Posterior vena cava (tissue), 2 donors: ENCODE measurements at regions of chr1 and their contacts with region 1.

Region 1: DNA sequence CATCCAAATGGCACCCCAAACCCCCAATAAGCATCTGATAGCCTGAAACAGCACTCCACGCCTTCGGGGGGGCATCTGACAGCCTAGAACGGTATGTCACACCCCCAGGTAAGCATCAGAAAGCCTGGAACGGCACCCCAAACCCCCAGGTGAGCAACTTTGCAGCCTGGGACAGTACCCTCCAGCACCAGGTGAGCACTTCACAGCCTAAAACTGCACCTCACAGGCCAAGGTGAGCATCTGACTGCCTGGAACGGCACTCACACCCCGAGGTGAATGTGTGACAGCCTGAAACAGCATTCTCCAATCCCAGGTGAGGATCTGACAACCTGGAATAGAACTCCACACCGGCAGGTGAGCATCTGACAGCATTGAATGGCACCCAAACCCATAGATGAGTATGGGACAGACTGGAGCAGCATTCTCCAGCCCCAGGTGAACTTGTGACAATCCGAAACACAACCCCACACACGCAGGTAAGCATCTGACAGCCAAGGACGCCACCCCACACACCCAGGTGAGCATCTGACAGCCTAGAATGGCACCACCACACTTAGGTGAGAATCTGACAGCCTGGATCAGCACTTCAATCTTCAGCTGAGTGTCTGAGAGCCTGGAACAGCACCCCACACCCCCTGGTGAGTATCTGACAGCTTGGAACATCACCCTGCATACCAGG is 18.3 kb upstream of the MMEL1 start:
- DNase-seq: peak; percentile 35

Region 2: GRCh38 chr1:2468041-2468472 is 183.0 kb before region 1 on chr1:
- intact Hi-C with region 1: loop called in 1 of 2 experiments (anchors 10 kb)
- DNase-seq: no peak

Region 3: GRCh38 chr1:4207183-4207582 is 1556.1 kb after region 1 on chr1:
- intact Hi-C with region 1: loop called in 1 of 2 experiments (anchors 5 kb)
- DNase-seq: no peak